ENCODE measurements at regions of chr3 and their contacts with region 1.

Region 1: DNA sequence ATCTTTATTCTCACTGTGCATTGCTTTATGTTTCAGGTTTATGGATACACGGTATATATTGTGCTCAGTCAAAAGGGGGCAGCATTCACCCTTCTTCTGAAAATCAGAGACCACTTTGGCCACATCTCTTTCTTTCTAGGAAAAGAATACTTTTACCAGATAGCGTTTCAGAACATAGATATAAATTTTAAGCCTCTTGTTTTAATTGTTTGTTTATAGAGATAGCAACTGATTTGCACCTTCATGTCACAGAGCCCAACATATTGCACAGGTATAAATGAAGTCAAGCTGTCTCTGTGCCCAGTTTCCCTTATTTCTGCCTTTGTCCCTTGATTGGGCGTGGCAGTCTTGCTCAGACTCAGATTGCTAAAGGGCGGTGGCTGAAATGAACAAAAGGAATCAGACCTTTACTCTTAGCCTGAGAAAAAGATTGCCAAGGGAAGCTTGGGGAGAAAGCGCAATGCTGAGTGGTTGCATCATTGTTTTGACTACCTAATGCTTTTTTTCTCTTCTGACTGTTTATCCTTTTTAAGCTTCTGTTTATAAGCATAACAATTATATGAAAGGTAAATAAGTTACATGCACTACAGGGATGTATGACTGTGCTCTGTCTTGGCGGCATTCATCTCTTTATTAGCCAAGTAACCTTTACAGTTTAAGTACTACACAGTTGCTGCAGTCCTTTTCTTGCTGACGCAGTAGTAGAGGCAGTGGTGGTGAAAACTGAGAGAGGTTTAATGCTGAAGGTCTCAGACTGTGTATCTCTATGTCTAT is 70.8 kb upstream of the ZBTB20 start:
- DNase-seq: peak in 2 of 3 donors; percentile 12 to 37
- ATAC-seq: peak; percentile 73 to 89
- H3K4me3 ChIP-seq: no peak overlapping the region
- H3K27ac ChIP-seq: no peak overlapping the region
- H3K4me1 ChIP-seq: peaks cover 3% of the 10 kb centered on the region
- H3K27me3 ChIP-seq: no peaks in the 10 kb centered on the region

Region 2: GRCh38 chr3:115341208-115341607 is 123.3 kb after region 1 on chr3:
- intact Hi-C with region 1: no loop called
- DNase-seq: no peak
- ATAC-seq: no peak
- H3K4me3 ChIP-seq: no peak overlapping the region
- H3K27ac ChIP-seq: no peak overlapping the region
- H3K4me1 ChIP-seq: no peaks in the 10 kb centered on the region
- H3K27me3 ChIP-seq: no peaks in the 10 kb centered on the region

Region 3: DNA sequence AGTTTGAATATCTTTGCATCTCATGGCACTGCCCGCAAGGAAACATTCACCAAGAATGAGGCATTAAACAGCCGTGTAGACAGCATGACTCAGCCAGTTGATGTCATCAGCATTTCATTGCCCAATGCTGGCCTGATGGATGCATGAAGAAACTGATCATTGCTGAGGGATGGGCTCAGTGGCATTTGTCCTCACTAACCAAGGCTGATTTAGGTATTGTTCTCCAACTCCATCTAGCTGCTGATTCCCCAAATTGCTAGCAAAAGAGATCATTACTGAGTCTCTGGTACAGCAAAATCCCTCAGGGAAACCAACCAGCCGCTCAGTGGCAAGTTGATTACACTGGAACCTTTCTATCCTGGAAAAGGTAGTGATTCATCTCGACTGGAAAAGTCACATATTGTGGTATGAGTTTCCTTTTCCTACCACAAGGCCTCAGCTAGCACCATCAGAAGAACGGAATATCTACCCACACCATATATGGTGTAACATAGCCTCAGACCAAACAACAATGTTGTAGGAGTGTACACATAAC is 219.0 kb after region 1 on chr3:
- intact Hi-C with region 1: loop called in 1 of 4 experiments (anchors 10 kb)
- DNase-seq: no peak
- ATAC-seq: no peak
- H3K4me3 ChIP-seq: no peak overlapping the region
- H3K27ac ChIP-seq: no peak overlapping the region
- H3K4me1 ChIP-seq: no peaks in the 10 kb centered on the region
- H3K27me3 ChIP-seq: no peaks in the 10 kb centered on the region

Region 4: GRCh38 chr3:115595611-115596275 is 377.9 kb after region 1 on chr3:
- intact Hi-C with region 1: no loop called
- DNase-seq: no peak
- ATAC-seq: no peak
- H3K4me3 ChIP-seq: no peak overlapping the region
- H3K27ac ChIP-seq: no peak overlapping the region
- H3K4me1 ChIP-seq: no peaks in the 10 kb centered on the region
- H3K27me3 ChIP-seq: no peaks in the 10 kb centered on the region

Region 5: DNA sequence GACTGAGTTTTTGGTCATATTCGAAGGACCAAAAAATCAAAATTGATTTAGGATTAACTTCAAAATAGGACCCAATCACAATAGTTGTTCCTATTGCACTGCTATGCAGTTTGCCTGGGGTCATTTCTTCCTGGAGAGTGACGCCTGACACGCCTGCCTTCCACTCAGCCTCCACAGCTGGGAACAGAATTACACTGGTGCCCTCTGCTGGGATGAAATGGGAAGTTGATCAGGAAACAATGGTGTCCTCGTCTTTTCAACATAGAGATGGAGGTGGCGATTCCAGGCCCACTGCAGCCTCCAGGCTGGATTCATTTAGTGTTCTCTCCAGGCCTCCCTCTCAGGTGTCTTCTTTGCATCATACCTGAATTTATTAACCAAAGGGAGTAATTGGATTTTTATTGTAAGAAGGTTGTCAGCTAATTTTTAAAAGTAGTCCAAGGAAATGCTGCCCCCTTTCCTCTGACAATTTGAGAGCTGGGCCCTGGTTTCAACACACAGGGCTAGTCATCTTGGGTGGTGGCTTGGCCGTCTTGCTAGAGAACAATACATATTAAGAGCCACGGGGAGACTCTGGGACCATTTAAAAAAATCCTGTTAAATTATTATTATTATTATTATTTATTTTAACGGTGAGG is 475.1 kb after region 1 on chr3:
- intact Hi-C with region 1: loop called (anchors 2 to 5 kb)
- DNase-seq: peak; percentile 60 to 80 (median 66)
- ATAC-seq: peak; percentile 96
- H3K4me3 ChIP-seq: no peak overlapping the region
- H3K27ac ChIP-seq: no peak overlapping the region
- H3K4me1 ChIP-seq: no peaks in the 10 kb centered on the region
- H3K27me3 ChIP-seq: no peaks in the 10 kb centered on the region

Region 6: DNA sequence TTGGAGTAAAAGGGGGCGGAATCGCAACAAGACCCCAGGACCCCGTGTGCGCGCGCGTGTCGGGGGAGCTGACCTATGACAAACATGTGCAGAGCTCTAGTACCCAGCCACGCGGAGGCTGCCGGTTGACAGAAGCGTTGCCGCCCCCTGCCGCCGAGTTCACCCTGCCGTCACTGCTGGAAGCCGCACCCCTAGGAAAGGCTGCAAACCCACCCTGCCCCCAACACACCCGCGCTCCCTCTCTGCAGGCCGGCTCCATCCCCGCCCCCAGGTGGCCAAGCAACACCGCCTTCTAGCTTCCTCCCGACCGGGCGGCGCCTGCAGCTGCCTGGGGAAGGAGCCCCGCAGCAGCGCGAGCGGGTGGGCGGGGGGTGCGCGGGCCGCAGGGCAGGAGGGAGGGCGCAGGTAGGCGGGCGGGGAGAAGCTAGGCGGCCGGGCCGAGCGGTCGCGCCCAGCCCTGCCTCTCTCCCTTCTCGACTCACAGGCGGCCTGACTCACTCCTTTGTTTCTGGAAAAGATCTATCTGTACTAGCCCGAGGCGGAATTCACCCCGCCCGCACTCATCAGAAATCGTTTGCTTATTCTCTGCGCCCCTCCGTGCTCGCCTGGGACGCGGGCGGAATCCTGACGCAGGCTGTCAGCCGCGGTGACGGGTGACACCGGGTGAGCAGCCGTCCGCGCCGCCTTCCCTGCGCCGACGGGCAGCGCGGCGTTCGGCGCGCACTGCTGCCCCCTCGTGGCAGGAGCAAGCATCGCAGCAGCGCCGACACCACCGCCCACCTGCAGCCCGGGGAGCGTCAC is 566.3 kb after region 1 on chr3:
- intact Hi-C with region 1: loop called (anchors 5 to 10 kb)
- DNase-seq: peak; percentile 92 to 96 (median 96)
- ATAC-seq: peak; percentile 97
- H3K4me3 ChIP-seq: peak overlapping the region; percentile 55
- H3K27ac ChIP-seq: peak overlapping the region; percentile 40
- H3K4me1 ChIP-seq: no peaks in the 10 kb centered on the region
- H3K27me3 ChIP-seq: no peaks in the 10 kb centered on the region

Region 7: DNA sequence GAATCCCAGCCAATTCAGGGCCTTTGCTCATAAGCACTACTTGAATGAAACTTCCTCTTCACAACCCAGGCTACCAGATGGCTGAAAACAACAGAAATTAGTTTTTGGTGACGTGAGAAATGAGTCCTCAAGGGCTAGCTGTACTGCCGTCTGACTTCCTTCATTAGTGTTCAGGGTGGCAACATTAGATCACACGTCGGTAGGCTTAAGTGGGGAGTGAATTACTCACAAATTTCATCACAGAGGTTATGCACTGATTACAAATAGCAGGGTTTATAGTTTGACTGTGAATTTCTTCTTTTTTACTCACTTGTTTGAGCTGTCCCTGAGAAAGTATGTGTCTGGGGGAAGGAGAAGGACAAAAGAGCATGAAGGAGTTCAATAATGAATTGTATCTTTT is 802.6 kb after region 1 on chr3:
- intact Hi-C with region 1: no loop called
- DNase-seq: no peak
- ATAC-seq: no peak
- H3K4me3 ChIP-seq: no peak overlapping the region
- H3K27ac ChIP-seq: no peak overlapping the region
- H3K4me1 ChIP-seq: no peaks in the 10 kb centered on the region
- H3K27me3 ChIP-seq: no peaks in the 10 kb centered on the region

Measured in right cardiac atrium (tissue), 5 donors.